ENCODE measurements at regions of chr4 and their contacts with region 1.

Region 1: GRCh38 chr4:158741326-158742025 is 18.3 kb upstream of the PPID start:
- DNase-seq: no peak
- ATAC-seq: no peak
- H3K4me3 ChIP-seq: no peak overlapping the region
- H3K4me3 Mint-ChIP-seq: no peak overlapping the region
- H3K27ac ChIP-seq: no peak overlapping the region
- H3K27ac Mint-ChIP-seq: no peak overlapping the region
- H3K4me1 ChIP-seq: no peaks in the 10 kb centered on the region
- H3K4me1 Mint-ChIP-seq: no peaks in the 10 kb centered on the region
- H3K27me3 ChIP-seq: peaks cover 0 to 17% (median 4%) of the 10 kb centered on the region in 4 experiments
- H3K27me3 Mint-ChIP-seq: peaks cover 18% of the 10 kb centered on the region
- CTCF ChIP-seq: no peak

Region 2: GRCh38 chr4:157838366-157838765 is 903.1 kb before region 1 on chr4:
- CTCF ChIA-PET with region 1: no interaction called
- POLR2A ChIA-PET with region 1: no interaction called
- intact Hi-C with region 1: no loop called
- DNase-seq: no peak
- ATAC-seq: no peak
- H3K4me3 ChIP-seq: no peak overlapping the region
- H3K4me3 Mint-ChIP-seq: no peak overlapping the region
- H3K27ac ChIP-seq: no peak overlapping the region
- H3K27ac Mint-ChIP-seq: no peak overlapping the region
- H3K4me1 ChIP-seq: no peaks in the 10 kb centered on the region
- H3K4me1 Mint-ChIP-seq: no peaks in the 10 kb centered on the region
- H3K27me3 ChIP-seq: no peaks in the 10 kb centered on the region
- H3K27me3 Mint-ChIP-seq: no peaks in the 10 kb centered on the region
- CTCF ChIP-seq: no peak

Region 3: GRCh38 chr4:158754385-158755180 is 13.1 kb after region 1 on chr4:
- CTCF ChIA-PET with region 1: no interaction called
- POLR2A ChIA-PET with region 1: no interaction called
- intact Hi-C with region 1: loop called (anchors 1 kb)
- DNase-seq: no peak
- ATAC-seq: no peak
- H3K4me3 ChIP-seq: no peak overlapping the region
- H3K4me3 Mint-ChIP-seq: no peak overlapping the region
- H3K27ac ChIP-seq: no peak overlapping the region
- H3K27ac Mint-ChIP-seq: no peak overlapping the region
- H3K4me1 ChIP-seq: no peaks in the 10 kb centered on the region
- H3K4me1 Mint-ChIP-seq: no peaks in the 10 kb centered on the region
- H3K27me3 ChIP-seq: peaks cover 0 to 18% (median 13%) of the 10 kb centered on the region in 4 experiments
- H3K27me3 Mint-ChIP-seq: peaks cover 44% of the 10 kb centered on the region
- CTCF ChIP-seq: no peak

Measured in B cell (primary cell).